B cell (primary cell): ENCODE measurements at regions of chr5 and their contacts with region 1.

Region 1: GRCh38 chr5:134648425-134649162 is at the start of gene SEC24A:
- DNase-seq: peak; percentile 94
- ATAC-seq: peak; percentile 83
- H3K4me3 ChIP-seq: peak within 1 kb of the TSS; percentile 80 to 91 (median 88)
- H3K4me3 Mint-ChIP-seq: peak within 1 kb of the TSS; percentile 96
- H3K27ac ChIP-seq: peak within 1 kb of the TSS; percentile 94 to 99
- H3K27ac Mint-ChIP-seq: peak within 1 kb of the TSS; percentile 94
- H3K4me1 ChIP-seq: peaks cover 17 to 18% of the 10 kb centered on the region in 2 donors
- H3K4me1 Mint-ChIP-seq: peaks cover 24% of the 10 kb centered on the region
- H3K27me3 ChIP-seq: no peaks in the 10 kb centered on the region
- H3K27me3 Mint-ChIP-seq: no peaks in the 10 kb centered on the region
- CTCF ChIP-seq: no peak
- total RNA-seq, gene SEC24A: 13.0 and 14.3 TPM in 2 replicates

Region 2: DNA sequence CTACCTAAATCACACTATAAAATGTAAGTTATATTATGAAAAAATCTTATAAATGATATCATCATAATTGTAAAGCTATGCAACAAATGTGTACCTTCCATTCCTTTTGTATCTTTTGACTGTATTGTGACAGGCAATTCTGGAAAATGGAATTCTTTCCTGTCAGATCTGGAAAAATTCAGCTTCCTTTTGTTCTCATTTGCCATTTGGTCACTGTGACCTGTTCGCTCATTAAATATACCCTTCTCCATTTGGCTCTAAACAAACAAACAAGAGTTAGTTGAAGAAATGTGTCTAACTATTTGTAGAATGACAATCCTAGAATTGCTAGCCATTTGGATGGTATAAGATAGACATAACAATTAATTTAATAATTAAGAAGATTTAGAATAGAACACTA is 344.3 kb before region 1 on chr5:
- CTCF ChIA-PET with region 1: no interaction called
- POLR2A ChIA-PET with region 1: no interaction called
- intact Hi-C with region 1: loop called (anchors 1 kb)
- DNase-seq: no peak
- ATAC-seq: no peak
- H3K4me3 ChIP-seq: no peak overlapping the region
- H3K4me3 Mint-ChIP-seq: no peak overlapping the region
- H3K27ac ChIP-seq: no peak overlapping the region
- H3K27ac Mint-ChIP-seq: no peak overlapping the region
- H3K4me1 ChIP-seq: peaks cover 0 to 2% of the 10 kb centered on the region in 2 donors
- H3K4me1 Mint-ChIP-seq: no peaks in the 10 kb centered on the region
- H3K27me3 ChIP-seq: no peaks in the 10 kb centered on the region
- H3K27me3 Mint-ChIP-seq: no peaks in the 10 kb centered on the region
- CTCF ChIP-seq: no peak

Region 3: GRCh38 chr5:134541736-134542376 is 106.7 kb before region 1 on chr5:
- CTCF ChIA-PET with region 1: no interaction called
- POLR2A ChIA-PET with region 1: no interaction called
- intact Hi-C with region 1: loop called (anchors 5 kb)
- DNase-seq: no peak
- ATAC-seq: no peak
- H3K4me3 ChIP-seq: no peak overlapping the region
- H3K4me3 Mint-ChIP-seq: peak overlapping the region; percentile 78
- H3K27ac ChIP-seq: peak overlapping the region; percentile 87 to 95
- H3K27ac Mint-ChIP-seq: peak overlapping the region; percentile 91
- H3K4me1 ChIP-seq: peaks cover 74 to 75% of the 10 kb centered on the region in 2 donors
- H3K4me1 Mint-ChIP-seq: peaks cover 70% of the 10 kb centered on the region
- H3K27me3 ChIP-seq: no peaks in the 10 kb centered on the region
- H3K27me3 Mint-ChIP-seq: no peaks in the 10 kb centered on the region
- CTCF ChIP-seq: no peak

Region 4: GRCh38 chr5:134637161-134637582 is 11.4 kb before region 1 on chr5:
- CTCF ChIA-PET with region 1: interaction called, 4 read pairs
- POLR2A ChIA-PET with region 1: no interaction called
- intact Hi-C with region 1: loop called (anchors 1 kb)
- DNase-seq: no peak
- ATAC-seq: no peak
- H3K4me3 ChIP-seq: no peak overlapping the region
- H3K4me3 Mint-ChIP-seq: no peak overlapping the region
- H3K27ac ChIP-seq: no peak overlapping the region
- H3K27ac Mint-ChIP-seq: no peak overlapping the region
- H3K4me1 ChIP-seq: peaks cover under 1 to 4% of the 10 kb centered on the region in 2 donors
- H3K4me1 Mint-ChIP-seq: peaks cover 6% of the 10 kb centered on the region
- H3K27me3 ChIP-seq: no peaks in the 10 kb centered on the region
- H3K27me3 Mint-ChIP-seq: no peaks in the 10 kb centered on the region
- CTCF ChIP-seq: no peak

Region 5: GRCh38 chr5:134758504-134759341 is 110.1 kb after region 1 on chr5 and contains the start of gene DDX46:
- CTCF ChIA-PET with region 1: interaction called, 3 read pairs
- POLR2A ChIA-PET with region 1: no interaction called
- intact Hi-C with region 1: loop called (anchors 1 kb)
- DNase-seq: peak; percentile 95
- ATAC-seq: peak; percentile 99
- H3K4me3 ChIP-seq: peak within 1 kb of the TSS; percentile 77 to 97 (median 86)
- H3K4me3 Mint-ChIP-seq: peak within 1 kb of the TSS; percentile 100
- H3K27ac ChIP-seq: peak within 1 kb of the TSS; percentile 54 to 80
- H3K27ac Mint-ChIP-seq: peak within 1 kb of the TSS; percentile 97
- H3K4me1 ChIP-seq: peaks cover 18 to 19% of the 10 kb centered on the region in 2 donors
- H3K4me1 Mint-ChIP-seq: peaks cover 36% of the 10 kb centered on the region
- H3K27me3 ChIP-seq: no peaks in the 10 kb centered on the region
- H3K27me3 Mint-ChIP-seq: no peaks in the 10 kb centered on the region
- CTCF ChIP-seq: peak; percentile 78
- total RNA-seq, gene DDX46: 75.7 and 80.9 TPM in 2 replicates

Region 6: DNA sequence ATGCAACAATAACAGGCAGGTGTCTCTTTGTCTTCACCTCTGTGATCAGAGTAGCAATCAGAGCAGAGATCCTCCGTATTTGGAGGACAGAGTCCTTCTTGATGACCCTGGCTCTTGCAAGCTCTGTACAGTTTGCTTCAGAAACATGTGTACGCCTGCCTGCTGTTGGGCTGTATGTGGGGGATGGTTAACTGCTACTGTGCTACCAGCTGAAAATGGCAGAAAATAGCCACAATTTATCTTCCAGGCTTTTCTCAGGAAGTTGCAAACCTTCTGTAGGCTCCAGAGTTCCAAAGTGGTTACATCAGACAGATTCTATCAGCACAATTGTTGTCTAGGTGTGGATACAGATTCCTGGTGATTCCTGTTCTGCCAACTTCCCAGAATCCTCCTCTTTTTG is 145.5 kb after region 1 on chr5:
- CTCF ChIA-PET with region 1: no interaction called
- POLR2A ChIA-PET with region 1: no interaction called
- intact Hi-C with region 1: no loop called
- DNase-seq: no peak
- ATAC-seq: no peak
- H3K4me3 ChIP-seq: no peak overlapping the region
- H3K4me3 Mint-ChIP-seq: no peak overlapping the region
- H3K27ac ChIP-seq: no peak overlapping the region
- H3K27ac Mint-ChIP-seq: no peak overlapping the region
- H3K4me1 ChIP-seq: no peaks in the 10 kb centered on the region
- H3K4me1 Mint-ChIP-seq: no peaks in the 10 kb centered on the region
- H3K27me3 ChIP-seq: no peaks in the 10 kb centered on the region
- H3K27me3 Mint-ChIP-seq: no peaks in the 10 kb centered on the region
- CTCF ChIP-seq: no peak

Region 7: DNA sequence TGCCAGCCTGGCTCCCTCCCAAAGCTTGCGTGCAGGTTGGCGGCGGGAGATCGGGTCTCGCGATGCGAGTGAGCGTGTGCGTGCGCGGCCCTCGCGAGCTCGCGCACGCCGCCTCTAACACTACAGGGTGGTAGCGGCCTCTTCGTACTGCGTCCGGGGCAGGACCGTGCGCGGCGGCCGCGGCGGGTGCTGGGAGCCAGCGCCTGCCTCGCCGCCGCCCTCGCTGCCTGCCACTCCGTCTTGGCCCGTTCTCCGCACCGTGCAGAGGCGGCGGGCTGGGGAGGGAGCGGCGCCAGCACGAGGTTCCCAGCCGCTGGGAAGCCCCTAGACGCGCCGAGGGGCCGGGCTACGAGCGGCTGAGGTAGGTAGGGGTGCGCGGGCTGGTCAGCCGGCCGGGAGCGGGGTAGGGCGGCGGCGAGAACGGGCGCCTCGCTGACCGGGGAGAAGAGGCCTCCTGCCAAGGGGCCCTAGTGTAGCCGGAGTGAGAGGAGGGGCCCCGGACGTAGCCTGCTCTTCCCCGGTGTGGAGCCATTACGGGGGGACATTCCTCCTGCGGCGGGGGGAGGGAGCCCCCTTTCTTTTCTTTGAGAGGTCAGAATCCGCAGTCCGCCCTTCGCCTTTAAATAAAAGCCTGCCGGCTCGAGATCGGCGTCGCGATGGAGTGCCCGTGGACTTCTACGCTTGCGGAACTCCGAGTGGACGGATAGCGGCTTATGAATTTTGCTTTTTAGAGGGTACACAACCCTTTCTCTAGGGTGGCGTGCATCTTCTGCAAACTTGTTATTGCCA is 197.5 kb after region 1 on chr5 and contains the start of gene C5orf24:
- CTCF ChIA-PET with region 1: no interaction called
- POLR2A ChIA-PET with region 1: no interaction called
- intact Hi-C with region 1: loop called (anchors 10 kb)
- DNase-seq: peak; percentile 97
- ATAC-seq: peak; percentile 91
- H3K4me3 ChIP-seq: peak within 1 kb of the TSS; percentile 84 to 93 (median 87)
- H3K4me3 Mint-ChIP-seq: peak within 1 kb of the TSS; percentile 95
- H3K27ac ChIP-seq: peak within 1 kb of the TSS; percentile 86 to 93
- H3K27ac Mint-ChIP-seq: peak within 1 kb of the TSS; percentile 95
- H3K4me1 ChIP-seq: peaks cover 17 to 21% of the 10 kb centered on the region in 2 donors
- H3K4me1 Mint-ChIP-seq: peaks cover 25% of the 10 kb centered on the region
- H3K27me3 ChIP-seq: no peaks in the 10 kb centered on the region
- H3K27me3 Mint-ChIP-seq: no peaks in the 10 kb centered on the region
- CTCF ChIP-seq: no peak
- total RNA-seq, gene C5orf24: 38.2 and 44.2 TPM in 2 replicates